HCT116 (cell line): ENCODE measurements at regions of chr3 and their contacts with region 1.

Region 1: GRCh38 chr3:68972358-68972979 is 40.1 kb upstream of the TAFA4 start:
- DNase-seq: peak; percentile 44
- ATAC-seq: peak; percentile 99
- H3K4me3 ChIP-seq: no peak overlapping the region
- H3K27ac ChIP-seq: no peak overlapping the region
- H3K4me1 ChIP-seq: no peaks in the 10 kb centered on the region
- H3K27me3 ChIP-seq: peaks cover 31% of the 10 kb centered on the region
- CTCF ChIP-seq: peak; percentile 29 to 94 (median 91); a peak in 5 of 6 replicates
- POLR2A ChIP-seq: no peak
- RAD21 ChIP-seq: peak; percentile 74

Region 2: DNA sequence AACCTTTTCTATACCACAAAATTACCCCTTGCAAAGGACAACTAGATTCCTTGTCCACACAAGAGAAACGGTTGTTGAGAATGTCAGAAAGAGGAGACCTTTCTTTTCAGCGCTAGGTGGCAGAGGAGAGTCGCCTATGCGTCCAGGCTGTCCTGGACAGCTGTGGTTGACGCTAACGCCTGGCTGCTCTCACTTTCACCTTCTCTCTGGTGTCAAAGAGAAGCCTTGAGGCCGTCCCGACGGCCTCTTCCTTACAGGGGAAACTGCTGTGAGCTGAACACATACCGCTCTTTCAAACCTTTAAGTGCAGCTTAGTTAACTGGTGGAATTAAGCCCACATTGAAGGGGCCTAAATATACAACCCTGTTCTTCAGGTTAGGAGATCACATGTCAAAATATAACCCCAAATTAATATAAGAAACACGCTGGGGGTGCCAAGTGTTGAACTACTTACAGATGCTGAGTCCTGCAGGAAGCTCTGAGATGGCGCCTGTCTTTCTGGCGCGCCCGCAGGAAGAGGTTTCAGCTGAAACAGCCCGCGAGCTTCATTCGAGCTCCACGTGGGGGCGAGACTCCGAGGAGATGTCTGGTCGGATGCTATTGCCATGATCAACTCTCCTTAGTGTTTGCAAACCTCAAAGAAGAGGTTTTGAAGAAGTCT is 2000.4 kb before region 1 on chr3:
- CTCF ChIA-PET with region 1: no interaction called
- POLR2A ChIA-PET with region 1: no interaction called
- RAD21 ChIA-PET with region 1: no interaction called
- intact Hi-C with region 1: loop called (anchors 10 kb)
- DNase-seq: peak; percentile 51
- ATAC-seq: peak; percentile 98
- H3K4me3 ChIP-seq: peak overlapping the region; percentile 17 to 35; a peak in 3 of 4 replicates
- H3K27ac ChIP-seq: no peak overlapping the region
- H3K4me1 ChIP-seq: peaks cover 0 to 6% of the 10 kb centered on the region in 2 experiments; a peak in 1 of 4 replicates
- H3K27me3 ChIP-seq: peaks cover 30% of the 10 kb centered on the region
- CTCF ChIP-seq: peak; percentile 59 to 84 (median 83); a peak in 5 of 6 replicates
- POLR2A ChIP-seq: no peak
- RAD21 ChIP-seq: peak; percentile 71

Region 3: DNA sequence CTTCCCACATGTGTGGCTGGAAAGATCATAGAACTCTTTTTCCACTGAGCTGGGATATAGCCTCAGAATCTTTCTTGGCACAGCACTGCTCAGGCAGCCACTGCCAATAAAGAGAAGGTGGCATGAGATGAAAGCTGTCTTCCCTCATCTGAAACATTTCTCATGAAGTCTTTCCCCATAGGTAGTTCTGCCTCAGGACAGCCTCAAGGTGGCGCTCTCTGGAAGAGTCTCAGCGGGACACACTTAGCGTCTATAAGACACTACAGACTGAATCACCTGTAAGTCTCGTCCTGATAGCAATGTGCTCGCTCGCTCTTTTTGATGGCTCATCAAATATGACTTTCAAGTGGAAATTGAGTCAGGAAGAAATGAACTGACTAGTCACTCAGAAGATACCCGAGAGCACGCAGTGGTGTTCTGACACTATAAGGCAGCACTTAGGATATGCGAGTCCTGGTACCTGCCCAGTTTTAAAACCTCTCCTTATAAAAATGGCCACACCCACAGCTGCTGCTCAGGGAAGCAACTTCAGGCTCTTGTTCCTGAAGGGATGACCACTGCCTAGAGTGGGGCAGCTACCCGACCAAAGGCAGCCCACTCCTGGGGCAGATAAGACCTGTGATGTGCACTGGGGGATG is 1587.6 kb before region 1 on chr3:
- CTCF ChIA-PET with region 1: no interaction called
- POLR2A ChIA-PET with region 1: no interaction called
- RAD21 ChIA-PET with region 1: no interaction called
- intact Hi-C with region 1: loop called (anchors 10 kb)
- DNase-seq: peak; percentile 42
- ATAC-seq: peak; percentile 88
- H3K4me3 ChIP-seq: no peak overlapping the region
- H3K27ac ChIP-seq: no peak overlapping the region
- H3K4me1 ChIP-seq: no peaks in the 10 kb centered on the region
- H3K27me3 ChIP-seq: no peaks in the 10 kb centered on the region
- CTCF ChIP-seq: peak; percentile 33 to 81 (median 78); a peak in 5 of 6 replicates
- POLR2A ChIP-seq: no peak
- RAD21 ChIP-seq: peak; percentile 59

Region 4: DNA sequence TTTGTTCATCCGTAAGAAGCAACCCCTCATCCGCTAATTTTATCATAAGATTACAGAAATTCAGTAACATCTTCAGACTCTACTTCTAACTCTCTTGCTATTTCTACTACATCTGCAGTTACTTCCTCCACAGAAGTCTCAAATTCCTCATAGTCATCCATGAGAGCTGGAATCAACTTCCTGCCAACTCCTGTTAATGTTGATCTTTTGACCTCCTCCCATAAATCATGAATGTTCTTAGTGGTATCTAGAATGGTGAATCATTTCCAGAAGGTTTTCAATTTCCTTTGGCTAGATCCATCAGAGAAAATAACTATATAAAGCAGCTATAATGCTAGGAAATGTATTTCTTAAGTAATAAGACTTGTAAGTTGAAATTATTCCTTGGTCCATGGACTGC is 155.2 kb before region 1 on chr3:
- CTCF ChIA-PET with region 1: no interaction called
- POLR2A ChIA-PET with region 1: no interaction called
- RAD21 ChIA-PET with region 1: no interaction called
- intact Hi-C with region 1: no loop called
- DNase-seq: no peak
- ATAC-seq: no peak
- H3K4me3 ChIP-seq: no peak overlapping the region
- H3K27ac ChIP-seq: no peak overlapping the region
- H3K4me1 ChIP-seq: no peaks in the 10 kb centered on the region
- H3K27me3 ChIP-seq: no peaks in the 10 kb centered on the region
- CTCF ChIP-seq: no peak
- POLR2A ChIP-seq: no peak
- RAD21 ChIP-seq: no peak

Region 5: DNA sequence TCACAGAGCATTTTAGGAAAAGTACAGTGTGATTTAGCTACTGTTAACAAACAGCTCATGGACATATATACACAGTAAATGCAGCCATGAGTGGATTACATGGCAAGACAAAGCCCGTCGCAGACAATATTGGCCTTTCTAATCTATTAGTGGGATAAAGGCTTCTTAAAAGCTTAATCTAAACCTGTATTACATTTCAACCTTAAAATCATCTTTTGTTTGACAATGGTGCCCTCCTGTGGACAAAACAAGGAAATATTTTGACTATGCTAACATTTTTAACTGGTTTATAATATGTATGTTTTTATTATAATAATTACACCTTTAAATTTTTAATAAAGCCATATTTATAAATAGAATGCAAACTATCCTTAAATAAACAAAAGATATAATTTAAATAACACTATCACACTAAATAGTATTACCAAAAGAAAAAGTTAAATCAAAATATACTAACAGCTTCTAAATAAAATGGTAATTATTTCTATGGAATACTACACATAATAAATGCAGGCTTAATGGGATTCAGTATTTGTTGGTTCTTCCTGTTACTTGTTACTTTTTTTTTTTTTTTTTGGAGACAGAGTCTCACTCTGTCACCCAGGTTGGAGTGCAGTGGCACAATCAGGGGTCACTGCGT is 78.7 kb before region 1 on chr3:
- CTCF ChIA-PET with region 1: interaction called, 7 read pairs
- POLR2A ChIA-PET with region 1: no interaction called
- RAD21 ChIA-PET with region 1: no interaction called
- intact Hi-C with region 1: loop called (anchors 5 kb)
- DNase-seq: no peak
- ATAC-seq: no peak
- H3K4me3 ChIP-seq: no peak overlapping the region
- H3K27ac ChIP-seq: no peak overlapping the region
- H3K4me1 ChIP-seq: no peaks in the 10 kb centered on the region
- H3K27me3 ChIP-seq: peaks cover 24% of the 10 kb centered on the region
- CTCF ChIP-seq: peak; percentile 8 to 45 (median 33); a peak in 4 of 6 replicates
- POLR2A ChIP-seq: no peak
- RAD21 ChIP-seq: peak; percentile 60

Region 6: GRCh38 chr3:69499899-69500421 is 527.5 kb after region 1 on chr3:
- CTCF ChIA-PET with region 1: no interaction called
- POLR2A ChIA-PET with region 1: no interaction called
- RAD21 ChIA-PET with region 1: no interaction called
- intact Hi-C with region 1: no loop called
- DNase-seq: no peak
- ATAC-seq: no peak
- H3K4me3 ChIP-seq: no peak overlapping the region
- H3K27ac ChIP-seq: no peak overlapping the region
- H3K4me1 ChIP-seq: no peaks in the 10 kb centered on the region
- H3K27me3 ChIP-seq: 0 out of 2 replicates have a peak, but pooled peaks cover 3% of the 10 kb centered on the region
- CTCF ChIP-seq: no peak
- POLR2A ChIP-seq: no peak
- RAD21 ChIP-seq: no peak